CD8-positive, alpha-beta T cell (primary cell): ENCODE measurements at regions of chr7 and their contacts with region 1.

Region 1: GRCh38 chr7:27564881-27565482 is 97.7 kb downstream of the HIBADH start:
- DNase-seq: no peak
- ATAC-seq: no peak
- H3K4me3 ChIP-seq: no peak overlapping the region
- H3K4me3 Mint-ChIP-seq: no peak overlapping the region
- H3K27ac ChIP-seq: no peak overlapping the region
- H3K27ac Mint-ChIP-seq: no peak overlapping the region
- H3K4me1 ChIP-seq: no peaks in the 10 kb centered on the region
- H3K4me1 Mint-ChIP-seq: no peaks in the 10 kb centered on the region
- H3K27me3 ChIP-seq: no peaks in the 10 kb centered on the region
- H3K27me3 Mint-ChIP-seq: no peaks in the 10 kb centered on the region
- CTCF ChIP-seq: no peak

Region 2: DNA sequence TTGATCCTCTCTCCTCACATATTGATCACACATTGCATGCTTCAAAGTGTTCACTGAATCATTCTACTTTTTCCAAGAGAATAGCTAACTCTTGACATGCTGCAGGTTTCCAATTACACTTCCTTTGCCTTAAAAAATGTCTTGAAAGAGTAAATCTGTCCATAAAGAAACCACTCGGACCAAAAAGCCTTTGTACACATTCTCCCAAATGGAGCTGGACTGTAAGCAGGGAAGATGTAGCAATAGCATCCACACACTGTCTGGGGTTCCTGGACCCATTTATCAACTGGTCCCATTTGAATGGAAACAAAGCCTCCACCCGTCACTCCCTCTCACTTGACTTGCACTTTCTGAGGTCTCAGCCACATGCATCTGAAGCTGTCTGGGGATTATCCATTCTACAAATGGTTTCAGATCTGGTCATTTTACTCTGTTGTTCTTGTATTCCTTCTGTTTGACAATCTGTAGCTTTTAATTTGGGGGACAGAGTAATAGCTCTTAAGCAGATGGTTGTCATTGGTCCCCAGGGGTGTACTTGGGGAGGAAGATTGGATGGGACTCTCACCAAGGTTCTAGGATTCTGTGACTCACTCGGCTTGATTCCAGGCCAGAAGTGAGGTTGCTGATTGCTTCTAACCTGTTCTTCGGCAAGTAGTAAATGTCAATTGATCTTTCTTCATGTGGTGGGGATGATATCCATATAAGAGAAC is 105.8 kb before region 1 on chr7:
- CTCF ChIA-PET with region 1: no interaction called
- POLR2A ChIA-PET with region 1: no interaction called
- intact Hi-C with region 1: no loop called
- DNase-seq: no peak
- ATAC-seq: no peak
- H3K4me3 ChIP-seq: no peak overlapping the region
- H3K4me3 Mint-ChIP-seq: no peak overlapping the region
- H3K27ac ChIP-seq: no peak overlapping the region
- H3K27ac Mint-ChIP-seq: no peak overlapping the region
- H3K4me1 ChIP-seq: no peaks in the 10 kb centered on the region
- H3K4me1 Mint-ChIP-seq: no peaks in the 10 kb centered on the region
- H3K27me3 ChIP-seq: no peaks in the 10 kb centered on the region
- H3K27me3 Mint-ChIP-seq: peaks cover 21% of the 10 kb centered on the region
- CTCF ChIP-seq: no peak

Region 3: GRCh38 chr7:27611043-27611442 is 46.1 kb after region 1 on chr7:
- CTCF ChIA-PET with region 1: no interaction called
- POLR2A ChIA-PET with region 1: no interaction called
- intact Hi-C with region 1: loop called in 1 of 2 experiments (anchors 2 kb)
- DNase-seq: no peak
- ATAC-seq: no peak
- H3K4me3 ChIP-seq: no peak overlapping the region
- H3K4me3 Mint-ChIP-seq: no peak overlapping the region
- H3K27ac ChIP-seq: no peak overlapping the region
- H3K27ac Mint-ChIP-seq: no peak overlapping the region
- H3K4me1 ChIP-seq: no peaks in the 10 kb centered on the region
- H3K4me1 Mint-ChIP-seq: no peaks in the 10 kb centered on the region
- H3K27me3 ChIP-seq: no peaks in the 10 kb centered on the region
- H3K27me3 Mint-ChIP-seq: no peaks in the 10 kb centered on the region
- CTCF ChIP-seq: no peak

Region 4: DNA sequence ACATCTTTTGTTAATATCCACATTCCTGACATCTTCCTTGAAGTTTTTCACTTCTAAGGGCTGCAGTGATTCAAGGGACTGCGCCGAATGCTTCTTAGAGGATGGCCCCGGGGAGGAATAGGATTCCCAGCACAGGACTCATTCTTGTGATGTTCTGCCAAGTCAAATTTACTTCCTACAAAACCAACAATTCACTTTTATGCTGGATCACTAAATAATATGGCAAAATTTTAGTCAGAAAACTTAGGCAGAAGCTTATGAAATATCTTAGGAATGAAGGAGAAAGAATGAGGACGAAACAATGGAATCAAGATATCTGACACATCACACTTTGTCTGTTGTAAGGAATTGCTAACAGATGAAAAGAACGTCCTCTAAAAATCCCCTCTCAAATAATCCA is 464.1 kb after region 1 on chr7:
- CTCF ChIA-PET with region 1: no interaction called
- POLR2A ChIA-PET with region 1: no interaction called
- intact Hi-C with region 1: no loop called
- DNase-seq: no peak
- ATAC-seq: no peak
- H3K4me3 ChIP-seq: no peak overlapping the region
- H3K4me3 Mint-ChIP-seq: no peak overlapping the region
- H3K27ac ChIP-seq: no peak overlapping the region
- H3K27ac Mint-ChIP-seq: no peak overlapping the region
- H3K4me1 ChIP-seq: no peaks in the 10 kb centered on the region
- H3K4me1 Mint-ChIP-seq: peaks cover 1% of the 10 kb centered on the region
- H3K27me3 ChIP-seq: no peaks in the 10 kb centered on the region
- H3K27me3 Mint-ChIP-seq: peaks cover 3% of the 10 kb centered on the region
- CTCF ChIP-seq: no peak